Right ventricle myocardium inferior (tissue), 1 donor: ENCODE measurements at regions of chr2 and their contacts with region 1.

Region 1: DNA sequence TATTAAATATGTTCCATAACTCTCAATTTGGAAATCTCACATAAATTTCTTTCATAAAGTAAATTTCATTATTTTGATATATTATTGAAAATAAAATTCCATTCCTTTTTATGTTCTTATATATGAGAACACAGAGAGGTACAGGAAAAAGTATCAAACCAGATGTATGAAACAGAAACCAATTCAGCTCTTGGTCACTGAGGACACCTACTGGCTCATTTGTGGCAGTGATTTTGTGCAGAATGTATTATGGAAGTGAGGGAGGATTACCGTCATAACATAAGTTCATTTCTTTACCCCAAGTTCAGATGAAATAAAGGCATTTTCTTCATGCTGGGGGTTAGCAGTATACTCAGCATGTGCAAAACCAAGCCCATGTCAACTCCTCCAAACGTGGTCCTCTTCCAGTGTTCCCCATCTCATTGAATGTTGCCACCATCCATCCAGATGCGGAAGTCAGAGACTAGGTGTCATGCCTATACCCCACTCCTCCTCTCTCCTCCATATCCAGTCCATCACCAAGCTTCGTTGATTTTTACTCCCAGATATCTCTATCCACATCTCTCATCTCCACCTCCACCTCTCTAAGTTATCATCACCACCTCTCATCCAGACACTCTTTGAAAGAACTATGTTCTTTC is 41.7 kb upstream of the MALL start:
- DNase-seq: no peak
- ATAC-seq: peak; percentile 64

Region 2: GRCh38 chr2:109676346-109676902 is 480.8 kb before region 1 on chr2:
- intact Hi-C with region 1: no loop called
- DNase-seq: no peak
- ATAC-seq: no peak

Region 3: DNA sequence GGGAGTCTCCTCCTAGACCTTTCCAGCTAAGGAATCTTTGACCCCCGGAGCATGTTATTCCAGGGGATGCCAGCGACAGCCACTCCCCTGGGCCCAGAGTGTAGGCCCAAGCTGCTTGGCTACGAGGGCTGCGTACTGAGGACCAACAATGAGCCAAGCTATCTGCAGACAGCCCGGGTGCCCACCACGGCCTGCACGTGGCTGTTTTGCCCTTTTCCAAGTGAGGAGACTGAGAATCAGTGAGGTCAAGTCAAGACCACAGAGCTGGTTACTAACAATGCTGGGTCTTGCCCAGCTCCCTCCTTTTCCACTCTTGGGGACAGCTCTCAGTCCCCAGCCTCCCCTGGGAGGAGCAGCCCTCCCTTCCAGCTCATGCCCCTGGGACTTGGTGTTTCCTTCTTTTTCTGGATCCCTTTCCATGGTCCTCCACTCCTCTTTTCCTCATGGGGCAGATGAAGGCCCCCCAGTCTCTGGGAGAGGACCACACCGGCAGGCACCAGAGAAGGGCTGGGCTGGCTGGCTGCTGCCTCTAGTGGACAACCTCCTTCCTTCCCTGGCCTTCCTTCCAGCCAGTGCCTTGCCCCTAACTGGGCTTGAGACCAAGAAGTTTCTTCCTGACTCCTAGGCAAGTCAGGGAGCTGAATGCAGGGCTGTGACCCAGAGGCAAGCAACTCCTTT is 41.1 kb before region 1 on chr2:
- intact Hi-C with region 1: loop called (anchors 2 kb)
- DNase-seq: no peak
- ATAC-seq: peak; percentile 75

Region 4: GRCh38 chr2:110204780-110205385 is 47.6 kb after region 1 on chr2 and contains the start of gene NPHP1:
- intact Hi-C with region 1: no loop called
- DNase-seq: peak; percentile 91
- ATAC-seq: peak; percentile 93
- total RNA-seq, gene NPHP1: 5.5 TPM